ENCODE measurements at regions of chr10 and their contacts with region 1.

Region 1: DNA sequence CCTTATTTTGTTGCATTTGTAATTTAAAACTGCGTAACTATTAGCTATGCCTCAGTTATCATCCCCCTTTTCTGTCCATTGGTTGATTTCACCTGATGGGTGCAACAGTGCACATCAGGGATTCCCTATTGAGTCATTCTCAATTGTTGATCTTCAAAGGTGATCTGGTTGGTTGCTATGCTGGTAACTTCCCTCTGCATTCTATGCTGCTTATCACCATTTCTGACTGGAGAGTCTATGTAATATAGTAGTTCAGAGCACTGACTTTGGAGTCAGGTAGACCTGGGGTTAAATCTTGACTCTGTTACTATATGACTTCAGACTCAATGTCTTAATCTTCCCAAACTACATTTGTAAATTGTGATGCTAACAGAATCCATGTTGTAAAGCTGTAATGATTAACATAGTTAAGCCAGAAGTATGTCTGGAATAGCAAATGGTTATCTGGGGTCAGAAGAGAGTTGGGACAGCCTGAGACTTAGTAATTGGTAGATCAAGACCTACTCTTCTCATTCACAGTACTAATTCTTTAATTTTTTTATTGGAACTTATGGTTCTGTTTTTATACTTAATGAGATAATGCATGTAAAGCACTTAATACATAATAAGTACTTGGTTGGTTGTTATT is 38.1 kb downstream of the EXOC6 start:
- DNase-seq: no peak
- ATAC-seq: no peak
- H3K4me3 ChIP-seq: no peak overlapping the region
- H3K4me3 Mint-ChIP-seq: no peak overlapping the region
- H3K27ac ChIP-seq: no peak overlapping the region
- H3K27ac Mint-ChIP-seq: no peak overlapping the region
- H3K4me1 ChIP-seq: no peaks in the 10 kb centered on the region
- H3K4me1 Mint-ChIP-seq: peaks cover 0 to 11% of the 10 kb centered on the region in 2 donors
- H3K27me3 ChIP-seq: no peaks in the 10 kb centered on the region
- H3K27me3 Mint-ChIP-seq: no peaks in the 10 kb centered on the region
- CTCF ChIP-seq: no peak

Region 2: GRCh38 chr10:92923416-92923815 is 37.0 kb after region 1 on chr10:
- intact Hi-C with region 1: no loop called
- DNase-seq: no peak
- ATAC-seq: no peak
- H3K4me3 ChIP-seq: no peak overlapping the region
- H3K4me3 Mint-ChIP-seq: no peak overlapping the region
- H3K27ac ChIP-seq: no peak overlapping the region
- H3K27ac Mint-ChIP-seq: no peak overlapping the region
- H3K4me1 ChIP-seq: no peaks in the 10 kb centered on the region
- H3K4me1 Mint-ChIP-seq: peaks cover 0 to 4% of the 10 kb centered on the region in 2 donors
- H3K27me3 ChIP-seq: no peaks in the 10 kb centered on the region
- H3K27me3 Mint-ChIP-seq: no peaks in the 10 kb centered on the region
- CTCF ChIP-seq: no peak

Region 3: DNA sequence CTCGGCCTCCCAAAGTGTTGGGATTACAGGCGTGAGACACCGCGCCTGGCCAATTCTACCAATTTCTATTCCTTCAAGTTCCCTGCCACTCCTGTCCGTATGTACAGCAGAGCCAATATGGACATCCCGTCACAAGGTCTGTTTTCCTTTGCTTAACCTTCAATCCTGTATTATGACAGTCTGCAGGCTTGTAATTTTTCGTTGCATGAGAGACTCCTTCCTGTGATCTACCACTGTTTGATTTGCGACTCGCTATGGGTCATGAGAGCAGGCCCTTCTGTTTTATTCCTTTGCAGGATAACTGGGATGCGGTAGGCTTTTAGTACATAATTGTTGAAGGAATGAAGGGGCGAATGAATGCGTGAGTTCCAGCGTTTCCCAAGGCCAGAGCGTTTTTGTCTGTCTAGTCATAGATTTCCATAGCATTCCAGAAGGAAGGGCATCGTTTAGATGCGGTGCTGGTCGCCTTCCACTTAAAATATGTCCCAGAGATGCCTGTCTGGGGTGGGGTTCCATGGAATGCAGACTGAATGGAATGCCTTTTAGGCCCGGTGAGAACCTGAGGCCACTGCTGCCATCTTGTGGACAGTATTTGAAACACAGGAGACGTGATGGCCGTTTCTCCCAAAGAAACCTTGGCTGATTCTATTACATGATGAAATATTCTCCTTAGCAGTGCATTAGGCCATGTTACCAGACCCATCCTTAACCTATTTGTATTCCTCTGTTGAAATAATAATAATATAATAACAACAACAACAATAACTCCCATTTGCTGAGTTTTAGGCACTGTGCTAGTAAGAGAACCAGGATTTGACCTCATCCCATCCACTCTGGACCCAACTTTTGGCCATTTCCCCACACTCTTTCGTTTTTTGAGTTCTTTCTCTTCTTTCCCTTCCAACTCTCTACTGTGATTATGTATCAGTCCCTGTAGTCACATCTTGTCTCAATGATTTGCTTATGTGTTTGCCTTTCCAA is 402.5 kb after region 1 on chr10:
- intact Hi-C with region 1: loop called (anchors 5 kb)
- DNase-seq: peak; percentile 24 to 73
- ATAC-seq: peak in 2 of 3 donors; percentile 46 to 54
- H3K4me3 ChIP-seq: no peak overlapping the region
- H3K4me3 Mint-ChIP-seq: no peak overlapping the region
- H3K27ac ChIP-seq: no peak overlapping the region
- H3K27ac Mint-ChIP-seq: no peak overlapping the region
- H3K4me1 ChIP-seq: no peaks in the 10 kb centered on the region
- H3K4me1 Mint-ChIP-seq: no peaks in the 10 kb centered on the region
- H3K27me3 ChIP-seq: no peaks in the 10 kb centered on the region
- H3K27me3 Mint-ChIP-seq: peaks cover 0 to 2% of the 10 kb centered on the region in 2 donors
- CTCF ChIP-seq: peak; percentile 67

Region 4: DNA sequence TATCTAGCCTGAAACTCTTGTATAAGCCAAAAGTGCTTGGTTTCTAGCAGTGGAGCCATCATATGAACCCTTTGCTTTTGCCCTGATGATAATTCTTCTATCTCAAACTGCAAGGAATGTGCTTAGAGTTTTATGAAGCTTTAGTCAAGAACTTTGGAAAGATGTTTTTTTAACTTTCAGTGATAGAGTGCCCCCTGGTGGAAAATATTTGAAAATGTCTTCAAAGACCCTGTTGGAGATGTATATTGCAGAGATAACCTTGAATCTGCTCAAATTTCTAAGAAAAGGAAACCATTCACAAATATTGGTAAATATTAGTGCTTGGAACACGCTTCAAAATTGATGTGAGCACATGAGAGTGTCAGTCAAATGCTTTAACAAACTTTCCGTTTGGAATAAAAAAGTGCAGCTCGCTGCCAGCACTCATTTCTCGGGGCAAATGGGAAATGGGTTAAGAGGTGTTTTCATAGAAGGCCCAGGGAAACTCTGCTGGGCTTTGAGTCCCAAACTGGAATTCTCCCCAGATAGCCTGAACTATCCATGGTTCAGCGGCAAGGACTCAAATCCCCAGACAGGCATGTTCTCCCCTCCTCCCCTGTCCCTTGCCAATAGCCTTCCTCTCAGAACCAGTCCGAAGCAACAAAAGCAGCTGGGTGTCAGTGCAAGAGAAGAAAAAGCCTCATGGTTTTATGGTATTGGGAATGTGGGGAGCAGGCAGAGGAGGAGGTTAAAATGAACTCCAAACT is 466.4 kb after region 1 on chr10:
- intact Hi-C with region 1: loop called (anchors 5 kb)
- DNase-seq: peak in 1 of 2 donors; percentile 60
- ATAC-seq: peak in 2 of 3 donors; percentile 31 to 45
- H3K4me3 ChIP-seq: no peak overlapping the region
- H3K4me3 Mint-ChIP-seq: no peak overlapping the region
- H3K27ac ChIP-seq: no peak overlapping the region
- H3K27ac Mint-ChIP-seq: no peak overlapping the region
- H3K4me1 ChIP-seq: no peaks in the 10 kb centered on the region
- H3K4me1 Mint-ChIP-seq: peaks cover 0 to 4% of the 10 kb centered on the region in 2 donors
- H3K27me3 ChIP-seq: no peaks in the 10 kb centered on the region
- H3K27me3 Mint-ChIP-seq: peaks cover 20 to 32% of the 10 kb centered on the region in 2 donors
- CTCF ChIP-seq: peak; percentile 85

Measured in natural killer cell (primary cell).